ENCODE measurements at regions of chr4 and their contacts with region 1.

Region 1: DNA sequence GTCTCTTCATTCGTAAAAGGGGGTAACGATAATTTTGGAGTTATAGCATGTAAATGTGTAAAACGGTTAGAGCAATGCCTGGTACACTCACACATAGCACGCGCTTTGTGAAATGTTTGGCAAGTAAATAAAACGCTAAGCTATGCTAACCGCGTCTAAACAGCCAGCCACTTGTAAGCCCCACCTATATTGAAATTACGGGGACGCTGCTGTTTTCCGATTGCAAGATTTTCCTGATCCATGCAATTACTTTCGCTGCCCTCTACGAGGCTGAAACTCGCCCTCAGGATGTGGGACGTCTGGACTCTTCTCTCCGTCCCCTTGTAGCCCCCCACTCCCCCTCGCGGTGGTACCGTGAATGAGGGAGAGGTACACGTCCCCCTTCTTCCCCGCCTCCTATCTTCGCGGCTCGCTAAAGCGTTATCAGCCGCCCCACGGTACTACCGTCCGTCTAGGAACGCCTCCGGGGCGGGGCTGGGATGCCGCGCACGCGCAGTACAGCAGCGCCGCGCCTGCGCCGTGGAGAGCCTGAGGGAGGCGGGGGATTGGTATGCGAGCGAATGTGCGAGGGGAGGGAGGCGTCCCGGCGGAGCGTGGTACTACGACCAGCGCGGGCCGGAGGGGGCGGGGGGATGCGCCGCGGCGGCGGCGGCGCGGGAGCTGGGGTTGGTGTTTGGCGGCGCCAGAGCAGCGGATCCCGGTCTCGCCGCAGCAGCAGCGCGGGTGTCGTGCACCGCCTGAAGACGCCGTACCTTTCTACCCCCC is at the start of gene STIM2:
- DNase-seq: peak; percentile 94 to 98
- ATAC-seq: peak; percentile 91 to 94 (median 92)
- H3K4me3 ChIP-seq: peak within 1 kb of the TSS; percentile 94
- H3K27ac ChIP-seq: peak within 1 kb of the TSS; percentile 89
- H3K4me1 ChIP-seq: peaks cover 39% of the 10 kb centered on the region
- H3K27me3 ChIP-seq: no peaks in the 10 kb centered on the region
- CTCF ChIP-seq: no peak
- total RNA-seq, gene STIM2: 4.9 to 8.4 (median 5.9) TPM

Region 2: GRCh38 chr4:26583865-26584652 is 276.3 kb before region 1 on chr4 and contains the start of gene TBC1D19:
- intact Hi-C with region 1: loop called (anchors 5 to 10 kb)
- DNase-seq: peak; percentile 86 to 91
- ATAC-seq: peak; percentile 99 to 100 (median 100)
- H3K4me3 ChIP-seq: peak within 1 kb of the TSS; percentile 87
- H3K27ac ChIP-seq: peak within 1 kb of the TSS; percentile 67
- H3K4me1 ChIP-seq: peaks cover 5% of the 10 kb centered on the region
- H3K27me3 ChIP-seq: no peaks in the 10 kb centered on the region
- CTCF ChIP-seq: no peak
- total RNA-seq, gene TBC1D19: 3.1 to 6.6 (median 5.4) TPM

Region 3: DNA sequence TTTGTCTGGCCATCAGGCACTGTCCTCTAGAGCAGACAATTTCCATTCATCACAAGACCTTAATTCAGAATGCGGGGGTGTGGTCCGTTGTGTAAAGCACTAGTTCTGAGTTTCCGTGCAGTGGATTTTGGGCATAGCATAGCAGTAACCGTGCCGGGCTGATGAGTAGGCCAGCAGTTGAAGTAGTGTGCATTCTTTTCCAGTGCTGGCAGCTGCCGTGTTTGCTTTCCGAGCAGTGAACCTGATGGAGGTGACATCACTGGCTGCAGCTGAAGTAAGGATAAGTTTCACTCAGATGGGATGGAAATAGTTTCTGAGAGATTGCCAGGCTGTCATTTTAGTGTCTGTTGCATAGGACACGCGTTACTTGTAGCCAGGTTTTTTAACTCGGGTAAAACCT is 106.7 kb before region 1 on chr4:
- intact Hi-C with region 1: loop called (anchors 5 kb)
- DNase-seq: peak; percentile 54 to 80
- ATAC-seq: peak; percentile 96 to 98 (median 98)
- H3K4me3 ChIP-seq: peak overlapping the region; percentile 37
- H3K27ac ChIP-seq: peak overlapping the region; percentile 76
- H3K4me1 ChIP-seq: peaks cover 33% of the 10 kb centered on the region
- H3K27me3 ChIP-seq: no peaks in the 10 kb centered on the region
- CTCF ChIP-seq: no peak

Region 4: GRCh38 chr4:26782168-26782829 is 78.0 kb before region 1 on chr4:
- intact Hi-C with region 1: no loop called
- DNase-seq: no peak
- ATAC-seq: no peak
- H3K4me3 ChIP-seq: no peak overlapping the region
- H3K27ac ChIP-seq: no peak overlapping the region
- H3K4me1 ChIP-seq: peaks cover 4% of the 10 kb centered on the region
- H3K27me3 ChIP-seq: no peaks in the 10 kb centered on the region
- CTCF ChIP-seq: no peak

Region 5: GRCh38 chr4:26793735-26794134 is 66.6 kb before region 1 on chr4:
- intact Hi-C with region 1: loop called in 1 of 2 experiments (anchors 5 kb)
- DNase-seq: no peak
- ATAC-seq: no peak
- H3K4me3 ChIP-seq: no peak overlapping the region
- H3K27ac ChIP-seq: no peak overlapping the region
- H3K4me1 ChIP-seq: peaks cover 12% of the 10 kb centered on the region
- H3K27me3 ChIP-seq: no peaks in the 10 kb centered on the region
- CTCF ChIP-seq: no peak

Region 6: GRCh38 chr4:26887143-26887542 is 26.8 kb after region 1 on chr4:
- intact Hi-C with region 1: no loop called
- DNase-seq: no peak
- ATAC-seq: no peak
- H3K4me3 ChIP-seq: no peak overlapping the region
- H3K27ac ChIP-seq: no peak overlapping the region
- H3K4me1 ChIP-seq: peaks cover 21% of the 10 kb centered on the region
- H3K27me3 ChIP-seq: no peaks in the 10 kb centered on the region
- CTCF ChIP-seq: no peak

Region 7: DNA sequence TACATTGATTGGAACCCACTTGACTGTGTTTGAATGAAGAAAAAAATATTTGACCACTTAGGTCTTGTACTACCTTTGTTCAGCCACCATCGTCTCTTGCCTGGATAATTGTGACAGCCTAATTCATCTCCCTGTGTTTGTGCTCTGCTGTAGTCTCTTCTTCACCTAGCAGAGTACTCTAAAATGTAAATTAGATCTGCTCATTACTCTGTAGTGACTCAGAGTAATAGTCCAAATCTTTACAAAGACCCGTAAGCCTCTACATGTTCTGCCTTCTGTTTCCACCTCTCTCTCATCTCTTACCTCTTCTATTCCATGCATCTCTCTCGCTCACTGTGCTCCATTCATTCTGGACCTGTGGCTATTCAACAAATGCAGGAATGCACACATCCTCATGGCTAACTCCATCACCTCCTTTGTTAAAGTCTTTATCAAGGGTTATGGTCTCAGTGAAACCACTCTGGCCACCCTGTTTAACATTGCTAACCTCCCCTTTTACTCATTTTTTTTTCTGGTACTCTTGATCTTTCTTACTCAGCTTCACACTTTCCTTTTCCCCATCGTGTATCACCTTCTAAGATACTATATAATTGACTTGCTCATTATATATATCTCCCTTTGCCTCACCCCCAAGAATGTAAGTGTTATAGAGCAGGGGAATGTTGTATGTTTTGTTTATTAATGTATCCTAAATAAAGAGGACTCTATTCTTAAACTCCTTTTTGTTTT is 98.8 kb after region 1 on chr4:
- intact Hi-C with region 1: no loop called
- DNase-seq: no peak
- ATAC-seq: no peak
- H3K4me3 ChIP-seq: no peak overlapping the region
- H3K27ac ChIP-seq: no peak overlapping the region
- H3K4me1 ChIP-seq: no peaks in the 10 kb centered on the region
- H3K27me3 ChIP-seq: no peaks in the 10 kb centered on the region
- CTCF ChIP-seq: no peak

Region 8: DNA sequence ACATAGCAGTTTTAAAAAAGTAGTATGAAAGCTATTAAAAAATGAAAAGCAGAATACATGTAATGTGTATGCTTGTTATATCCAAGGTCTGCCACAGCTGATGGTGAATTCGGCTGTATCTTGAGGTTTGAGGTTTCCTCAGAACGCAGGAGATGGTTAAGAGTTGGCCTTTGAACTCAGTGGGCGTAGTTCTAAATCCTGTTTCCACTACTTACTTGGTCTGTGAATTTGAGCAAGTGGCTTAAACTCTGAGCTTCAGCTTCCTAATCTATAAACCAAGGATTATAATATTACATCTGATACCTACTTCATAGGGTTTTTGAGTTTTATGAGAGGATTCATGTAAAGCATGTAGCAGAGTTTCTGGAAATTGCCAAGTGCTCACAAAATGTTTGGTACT is 125.5 kb after region 1 on chr4:
- intact Hi-C with region 1: loop called in 1 of 2 experiments (anchors 10 kb)
- DNase-seq: no peak
- ATAC-seq: no peak
- H3K4me3 ChIP-seq: no peak overlapping the region
- H3K27ac ChIP-seq: no peak overlapping the region
- H3K4me1 ChIP-seq: peaks cover 16% of the 10 kb centered on the region
- H3K27me3 ChIP-seq: no peaks in the 10 kb centered on the region
- CTCF ChIP-seq: no peak

Region 9: GRCh38 chr4:27010334-27010940 is 150.1 kb after region 1 on chr4:
- intact Hi-C with region 1: loop called in 1 of 2 experiments (anchors 2 kb)
- DNase-seq: peak; percentile 42 to 66
- ATAC-seq: peak; percentile 71 to 90 (median 77)
- H3K4me3 ChIP-seq: no peak overlapping the region
- H3K27ac ChIP-seq: no peak overlapping the region
- H3K4me1 ChIP-seq: peaks cover 3% of the 10 kb centered on the region
- H3K27me3 ChIP-seq: no peaks in the 10 kb centered on the region
- CTCF ChIP-seq: peak; percentile 94

Region 10: DNA sequence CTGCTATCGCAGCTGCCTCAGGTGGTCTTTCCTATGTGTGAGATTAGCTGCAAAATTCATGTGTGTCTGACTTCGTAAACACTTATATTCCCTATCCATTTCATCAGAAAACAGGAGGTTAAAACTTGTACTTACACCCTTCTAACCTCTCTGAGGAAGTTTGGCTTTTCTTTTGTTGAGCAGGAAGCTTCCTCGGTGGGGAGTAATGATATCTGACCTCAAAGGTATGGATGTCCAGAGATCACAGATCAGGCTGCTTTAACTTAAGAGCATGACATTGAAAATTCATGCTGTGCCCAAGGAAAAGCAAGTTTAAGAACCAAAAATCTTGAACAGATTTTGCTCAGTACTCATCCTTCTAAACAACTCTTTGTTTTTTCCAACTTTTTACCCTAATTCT is 429.4 kb after region 1 on chr4:
- intact Hi-C with region 1: no loop called
- DNase-seq: no peak
- ATAC-seq: no peak
- H3K4me3 ChIP-seq: no peak overlapping the region
- H3K27ac ChIP-seq: no peak overlapping the region
- H3K4me1 ChIP-seq: no peaks in the 10 kb centered on the region
- H3K27me3 ChIP-seq: no peaks in the 10 kb centered on the region
- CTCF ChIP-seq: no peak

Measured in psoas muscle (tissue), 8 donors.